Heart left ventricle (tissue), 16 donors: ENCODE measurements at regions of chr16 and their contacts with region 1.

Region 1: DNA sequence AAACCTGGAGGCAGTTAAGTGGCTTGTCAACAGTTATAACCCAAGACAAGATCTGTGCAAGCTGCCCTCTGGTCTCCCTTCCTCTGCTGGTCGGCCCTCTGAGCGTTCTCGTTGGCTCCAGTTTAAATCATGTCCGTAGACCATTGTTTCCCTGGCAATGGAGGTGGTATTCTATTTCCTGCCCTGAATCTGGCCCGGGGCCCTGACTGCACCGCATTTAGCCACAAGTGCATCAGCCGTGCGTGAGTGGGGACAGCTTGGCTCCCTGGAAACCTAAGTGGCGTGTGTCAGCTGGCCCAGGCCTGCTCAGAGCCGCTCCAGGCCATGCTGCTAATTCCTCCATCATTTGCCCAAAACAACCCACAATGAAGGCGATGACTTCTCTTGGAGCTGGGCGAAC is 15.0 kb upstream of the MYLK3 start:
- DNase-seq: peak; percentile 78 to 93 (median 84)
- ATAC-seq: peak; percentile 89 to 94 (median 92)
- H3K4me3 ChIP-seq: peak overlapping the region in 10 of 12 donors; percentile 23 to 60 (median 49)
- H3K27ac ChIP-seq: peak overlapping the region; percentile 10 to 90 (median 76)
- H3K4me1 ChIP-seq: peaks cover 0 to 22% (median 1%) of the 10 kb centered on the region in 12 donors
- H3K27me3 ChIP-seq: peaks cover 0 to 9% (median 0%) of the 10 kb centered on the region in 9 donors
- CTCF ChIP-seq: no peak
- POLR2A ChIP-seq: peak in 1 of 2 donors; percentile 41

Region 2: GRCh38 chr16:46711106-46712058 is 51.8 kb before region 1 on chr16:
- intact Hi-C with region 1: loop called in 2 of 10 experiments (anchors 5 kb)
- DNase-seq: peak; percentile 69 to 84 (median 77)
- ATAC-seq: peak; percentile 71 to 84 (median 78)
- H3K4me3 ChIP-seq: no peak overlapping the region
- H3K27ac ChIP-seq: peak overlapping the region; percentile 9 to 84 (median 68)
- H3K4me1 ChIP-seq: peaks cover 5 to 62% (median 28%) of the 10 kb centered on the region in 12 donors
- H3K27me3 ChIP-seq: no peaks in the 10 kb centered on the region
- CTCF ChIP-seq: no peak
- POLR2A ChIP-seq: no peak

Region 3: DNA sequence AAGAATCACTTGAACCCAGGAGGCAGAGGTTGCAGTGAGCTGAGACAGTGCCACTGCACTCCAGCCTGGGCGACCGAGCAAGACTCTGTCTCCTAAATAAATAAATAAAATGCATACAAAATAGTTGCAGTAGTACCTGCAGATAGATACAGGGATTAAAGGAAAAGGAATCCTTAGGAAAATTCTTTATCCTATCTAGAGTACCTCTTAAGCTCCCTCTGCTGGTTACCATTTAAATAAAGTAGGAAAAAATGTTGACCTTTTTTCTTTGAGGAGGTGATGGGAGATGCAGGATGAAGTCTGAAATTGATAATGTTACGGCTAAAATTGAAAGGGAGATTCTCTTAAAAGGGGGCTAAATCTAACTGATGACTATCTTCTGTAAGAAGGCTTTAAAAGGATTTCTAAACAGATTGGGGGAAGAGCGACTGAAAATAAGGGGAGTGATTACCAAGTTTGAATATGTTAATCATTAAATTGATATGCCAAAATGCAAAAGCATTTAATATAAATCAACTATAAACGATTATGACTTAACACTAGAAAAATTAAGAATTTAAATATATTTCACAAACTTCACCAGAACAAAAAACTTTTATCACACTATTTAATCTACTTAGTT is 38.4 kb after region 1 on chr16:
- intact Hi-C with region 1: loop called in 1 of 10 experiments (anchors 5 kb)
- DNase-seq: no peak
- ATAC-seq: peak in 2 of 4 donors; percentile 55 to 56
- H3K4me3 ChIP-seq: no peak overlapping the region
- H3K27ac ChIP-seq: no peak overlapping the region
- H3K4me1 ChIP-seq: no peaks in the 10 kb centered on the region
- H3K27me3 ChIP-seq: no peaks in the 10 kb centered on the region
- CTCF ChIP-seq: peak; percentile 19 to 60 (median 50)
- POLR2A ChIP-seq: no peak

Region 4: GRCh38 chr16:47358816-47359215 is 595.7 kb after region 1 on chr16:
- intact Hi-C with region 1: no loop called
- DNase-seq: no peak
- ATAC-seq: no peak
- H3K4me3 ChIP-seq: no peak overlapping the region
- H3K27ac ChIP-seq: no peak overlapping the region
- H3K4me1 ChIP-seq: peaks cover 0 to 8% (median 0%) of the 10 kb centered on the region in 12 donors
- H3K27me3 ChIP-seq: no peaks in the 10 kb centered on the region
- CTCF ChIP-seq: no peak
- POLR2A ChIP-seq: no peak